ENCODE measurements at regions of chr1 and their contacts with region 1.

Region 1: GRCh38 chr1:87208931-87209330 is 119.7 kb upstream of the LMO4 start:
- DNase-seq: peak; percentile 79 to 80
- H3K4me3 ChIP-seq: no peak overlapping the region
- H3K27ac ChIP-seq: no peak overlapping the region
- H3K4me1 ChIP-seq: no peaks in the 10 kb centered on the region
- H3K27me3 ChIP-seq: no peaks in the 10 kb centered on the region
- CTCF ChIP-seq: no peak
- POLR2A ChIP-seq: no peak

Region 2: DNA sequence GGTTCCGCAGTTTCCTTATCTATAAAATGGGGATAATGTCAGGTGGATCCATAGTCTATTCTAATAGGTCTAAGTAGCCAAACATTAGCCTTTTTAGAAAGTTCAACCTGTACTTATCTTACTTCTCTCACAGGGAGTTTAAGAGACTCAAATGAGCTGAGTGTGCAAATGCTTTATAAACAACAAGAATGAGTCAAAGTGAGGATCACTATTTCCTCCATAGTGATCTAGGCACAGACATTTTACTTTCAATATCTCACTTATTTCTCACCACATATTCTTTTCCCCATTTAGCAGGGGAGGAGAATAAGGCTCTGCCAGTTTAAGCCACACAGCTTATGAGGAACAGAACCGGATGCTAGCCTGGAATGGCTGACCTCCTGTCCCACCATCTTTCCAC is 27.7 kb after region 1 on chr1:
- intact Hi-C with region 1: no loop called
- DNase-seq: no peak
- H3K4me3 ChIP-seq: no peak overlapping the region
- H3K27ac ChIP-seq: no peak overlapping the region
- H3K4me1 ChIP-seq: no peaks in the 10 kb centered on the region
- H3K27me3 ChIP-seq: no peaks in the 10 kb centered on the region
- CTCF ChIP-seq: no peak
- POLR2A ChIP-seq: no peak

Region 3: GRCh38 chr1:87464022-87464490 is 255.1 kb after region 1 on chr1:
- intact Hi-C with region 1: loop called (anchors 5 kb)
- DNase-seq: no peak
- H3K4me3 ChIP-seq: no peak overlapping the region
- H3K27ac ChIP-seq: no peak overlapping the region
- H3K4me1 ChIP-seq: no peaks in the 10 kb centered on the region
- H3K27me3 ChIP-seq: no peaks in the 10 kb centered on the region
- CTCF ChIP-seq: no peak
- POLR2A ChIP-seq: no peak

Region 4: GRCh38 chr1:87733386-87733785 is 524.5 kb after region 1 on chr1:
- intact Hi-C with region 1: no loop called
- DNase-seq: no peak
- H3K4me3 ChIP-seq: no peak overlapping the region
- H3K27ac ChIP-seq: no peak overlapping the region
- H3K4me1 ChIP-seq: no peaks in the 10 kb centered on the region
- H3K27me3 ChIP-seq: no peaks in the 10 kb centered on the region
- CTCF ChIP-seq: no peak
- POLR2A ChIP-seq: no peak

Measured in vagina (tissue), 2 donors.